ENCODE measurements at regions of chr20 and their contacts with region 1.

Region 1: GRCh38 chr20:45798935-45799642 is 7.3 kb downstream of the DNTTIP1 start:
- DNase-seq: no peak
- ATAC-seq: peak; percentile 99
- H3K4me3 ChIP-seq: no peak overlapping the region
- H3K27ac ChIP-seq: no peak overlapping the region
- H3K4me1 ChIP-seq: no peaks in the 10 kb centered on the region
- H3K27me3 ChIP-seq: no peaks in the 10 kb centered on the region
- CTCF ChIP-seq: peak; percentile 69 to 78 (median 73)
- EP300 ChIP-seq: no peak
- POLR2A ChIP-seq: no peak
- RAD21 ChIP-seq: peak; percentile 66

Region 2: DNA sequence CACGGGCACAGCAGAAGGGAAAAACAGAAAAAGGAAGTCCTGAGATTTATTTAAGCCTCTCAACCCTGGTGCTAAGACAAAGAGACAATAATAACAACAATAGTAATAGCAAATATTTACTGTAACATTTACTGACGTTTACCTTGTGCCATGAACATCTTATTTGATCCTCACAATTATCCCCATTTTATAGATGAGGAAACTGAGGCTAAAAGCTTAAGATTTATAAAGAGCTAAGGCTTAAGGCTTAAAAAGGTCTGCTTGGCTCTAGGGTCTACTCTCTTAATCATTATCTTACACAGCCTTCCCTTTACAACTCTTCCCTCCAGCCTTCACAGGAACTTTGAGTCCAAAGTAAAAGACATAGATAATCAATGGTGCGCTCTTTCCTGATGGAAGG is 10.7 kb before region 1 on chr20:
- CTCF ChIA-PET with region 1: interaction called, 17 read pairs
- POLR2A ChIA-PET with region 1: no interaction called
- RAD21 ChIA-PET with region 1: no interaction called
- SMC1A ChIA-PET with region 1: interaction called, 8 read pairs
- in situ Hi-C with region 1: no loop called
- intact Hi-C with region 1: no loop called
- DNase-seq: no peak
- ATAC-seq: no peak
- H3K4me3 ChIP-seq: no peak overlapping the region
- H3K27ac ChIP-seq: no peak overlapping the region
- H3K4me1 ChIP-seq: 0 out of 2 replicates have a peak, but pooled peaks cover 5% of the 10 kb centered on the region
- H3K27me3 ChIP-seq: no peaks in the 10 kb centered on the region
- CTCF ChIP-seq: no peak
- EP300 ChIP-seq: no peak
- POLR2A ChIP-seq: no peak
- RAD21 ChIP-seq: no peak

Region 3: GRCh38 chr20:45812157-45813020 is 13.3 kb after region 1 on chr20 and contains the start of gene UBE2C:
- CTCF ChIA-PET with region 1: interaction called, 19 read pairs
- POLR2A ChIA-PET with region 1: no interaction called
- RAD21 ChIA-PET with region 1: interaction called, 9 read pairs
- SMC1A ChIA-PET with region 1: interaction called, 5 read pairs
- in situ Hi-C with region 1: no loop called
- intact Hi-C with region 1: no loop called
- DNase-seq: peak; percentile 98
- ATAC-seq: peak; percentile 100
- H3K4me3 ChIP-seq: peak within 1 kb of the TSS; percentile 85
- H3K27ac ChIP-seq: peak within 1 kb of the TSS; percentile 93
- H3K4me1 ChIP-seq: no peaks in the 10 kb centered on the region
- H3K27me3 ChIP-seq: no peaks in the 10 kb centered on the region
- CTCF ChIP-seq: no peak
- EP300 ChIP-seq: no peak
- POLR2A ChIP-seq: peak; percentile 88
- RAD21 ChIP-seq: no peak
- polyA plus RNA-seq, gene UBE2C: 86.2 to 140 TPM

Region 4: DNA sequence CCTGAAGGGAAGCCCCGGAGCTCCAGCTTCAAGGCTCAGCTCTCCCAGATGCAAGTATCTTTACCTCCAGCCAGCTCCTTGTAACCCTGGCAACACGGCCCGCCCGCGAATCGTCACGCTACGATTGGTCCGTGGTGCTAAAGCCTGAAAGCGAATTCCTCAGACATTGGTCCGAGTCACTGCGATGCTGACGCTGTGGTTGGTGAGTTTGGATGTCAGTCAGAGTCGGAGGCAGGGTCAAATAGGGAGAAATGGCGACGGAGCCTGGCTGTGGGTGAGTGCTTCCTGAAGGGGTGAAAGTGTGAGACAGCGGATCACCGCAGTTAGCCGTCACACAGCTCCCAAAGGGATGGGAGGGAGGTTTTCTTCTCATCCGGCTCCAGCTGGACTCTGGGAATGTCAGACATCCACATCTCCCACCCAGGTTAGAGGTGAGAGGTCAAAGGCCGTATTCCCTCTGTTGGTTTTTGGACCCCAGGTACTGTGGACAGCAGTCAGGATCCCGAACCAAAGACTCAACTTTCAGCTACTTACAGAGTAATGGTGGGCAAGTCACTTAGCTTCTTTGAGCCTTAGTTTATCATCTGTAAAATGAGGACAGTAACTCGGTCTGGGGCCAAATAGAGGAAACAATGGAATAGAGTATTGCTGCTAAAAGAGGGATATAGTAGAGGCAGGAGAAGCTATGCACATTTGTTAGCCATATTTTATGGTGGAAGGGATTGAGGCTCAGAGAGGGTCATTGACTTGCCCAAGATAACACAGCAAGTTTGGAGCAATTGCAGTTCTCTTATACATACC is 82.1 kb after region 1 on chr20 and contains the start of gene ZSWIM1:
- CTCF ChIA-PET with region 1: interaction called, 17 read pairs
- POLR2A ChIA-PET with region 1: no interaction called
- RAD21 ChIA-PET with region 1: interaction called, 6 read pairs
- SMC1A ChIA-PET with region 1: interaction called, 4 read pairs
- in situ Hi-C with region 1: no loop called
- intact Hi-C with region 1: no loop called
- DNase-seq: peak; percentile 99
- ATAC-seq: peak; percentile 100
- H3K4me3 ChIP-seq: peak within 1 kb of the TSS; percentile 84
- H3K27ac ChIP-seq: peak within 1 kb of the TSS; percentile 73
- H3K4me1 ChIP-seq: peaks cover 12% of the 10 kb centered on the region
- H3K27me3 ChIP-seq: no peaks in the 10 kb centered on the region
- CTCF ChIP-seq: no peak
- EP300 ChIP-seq: no peak
- POLR2A ChIP-seq: peak; percentile 98
- RAD21 ChIP-seq: no peak
- polyA plus RNA-seq, gene ZSWIM1: 2.4 to 2.5 TPM

Region 5: GRCh38 chr20:45890985-45891983 is 92.2 kb after region 1 on chr20 and contains the starts of genes CTSA and NEURL2:
- CTCF ChIA-PET with region 1: interaction called, 17 read pairs
- POLR2A ChIA-PET with region 1: no interaction called
- RAD21 ChIA-PET with region 1: no interaction called
- SMC1A ChIA-PET with region 1: interaction called, 3 read pairs
- in situ Hi-C with region 1: no loop called
- intact Hi-C with region 1: no loop called
- DNase-seq: peak; percentile 51
- ATAC-seq: peak; percentile 87
- H3K4me3 ChIP-seq: peak within 1 kb of the TSS; percentile 83
- H3K27ac ChIP-seq: peak within 1 kb of the TSS; percentile 75
- H3K4me1 ChIP-seq: peaks cover 22% of the 10 kb centered on the region
- H3K27me3 ChIP-seq: no peaks in the 10 kb centered on the region
- CTCF ChIP-seq: peak in 1 of 3 experiments; percentile 26; a peak in 1 of 6 replicates
- EP300 ChIP-seq: peak; percentile 43 to 62; a peak in 2 of 4 replicates
- POLR2A ChIP-seq: peak; percentile 88
- RAD21 ChIP-seq: 0 out of 2 replicates have a peak, but pooled peaks have one; percentile 9
- polyA plus RNA-seq, gene CTSA: 7.1 to 8.6 TPM
- polyA plus RNA-seq, gene NEURL2: 0.97 to 1.8 TPM

Region 6: DNA sequence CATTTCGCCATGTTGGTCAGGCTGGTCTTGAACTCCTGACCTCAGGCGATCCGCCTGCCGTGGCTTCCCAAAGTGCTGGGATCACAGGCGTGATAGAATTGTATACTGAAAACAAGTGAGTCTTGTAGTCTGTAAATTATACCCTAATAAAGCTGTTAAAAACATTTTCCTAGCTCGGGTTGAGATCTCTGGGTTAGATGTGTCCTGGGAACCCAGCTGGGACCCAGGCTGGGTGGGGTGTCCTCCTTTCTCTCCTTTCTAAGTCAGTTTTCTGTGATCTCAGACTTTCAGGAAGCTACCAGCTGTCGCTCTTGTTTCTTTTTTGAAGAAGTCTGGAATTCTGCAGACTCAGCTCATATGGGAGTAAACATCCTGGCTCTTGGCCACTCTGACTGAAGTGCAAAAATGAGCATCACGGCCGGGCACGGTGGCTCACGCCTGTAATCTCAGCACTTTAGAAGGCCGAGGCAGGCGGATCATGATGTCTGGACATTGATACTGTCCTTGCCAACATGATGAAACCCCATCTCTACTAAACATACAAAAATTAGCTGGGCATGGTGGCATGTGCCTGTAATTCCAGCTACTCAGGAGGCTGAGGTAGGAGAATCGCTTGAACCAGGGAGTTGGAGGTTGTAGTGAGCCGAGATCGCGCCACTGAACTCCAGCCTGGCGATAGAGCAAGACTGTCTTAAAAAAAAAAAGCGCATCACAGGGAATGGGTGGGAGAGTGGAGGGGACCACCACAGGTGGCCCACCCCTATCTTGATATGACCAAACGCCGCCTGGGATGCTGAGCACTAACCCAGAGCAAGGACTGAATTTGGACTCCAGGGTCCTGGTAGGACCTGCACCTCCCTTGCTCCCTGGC is 125.5 kb after region 1 on chr20:
- CTCF ChIA-PET with region 1: interaction called, 6 read pairs
- POLR2A ChIA-PET with region 1: no interaction called
- RAD21 ChIA-PET with region 1: interaction called, 3 read pairs
- SMC1A ChIA-PET with region 1: interaction called, 11 read pairs
- in situ Hi-C with region 1: no loop called
- intact Hi-C with region 1: no loop called
- DNase-seq: no peak
- ATAC-seq: no peak
- H3K4me3 ChIP-seq: no peak overlapping the region
- H3K27ac ChIP-seq: no peak overlapping the region
- H3K4me1 ChIP-seq: no peaks in the 10 kb centered on the region
- H3K27me3 ChIP-seq: no peaks in the 10 kb centered on the region
- CTCF ChIP-seq: no peak
- EP300 ChIP-seq: no peak
- POLR2A ChIP-seq: no peak
- RAD21 ChIP-seq: no peak